A549 (cell line): ENCODE measurements at regions of chr20 and their contacts with region 1.

Region 1: GRCh38 chr20:41095110-41095969 is 42.0 kb upstream of the PLCG1 start:
- DNase-seq: peak; percentile 53 to 64
- ATAC-seq: peak; percentile 86 to 87
- H3K4me3 ChIP-seq: no peak overlapping the region
- H3K27ac ChIP-seq: no peak overlapping the region
- H3K4me1 ChIP-seq: no peaks in the 10 kb centered on the region
- CTCF ChIP-seq: peak; percentile 91
- EP300 ChIP-seq: no peak
- POLR2A ChIP-seq: no peak
- RAD21 ChIP-seq: peak; percentile 79 to 81

Region 2: DNA sequence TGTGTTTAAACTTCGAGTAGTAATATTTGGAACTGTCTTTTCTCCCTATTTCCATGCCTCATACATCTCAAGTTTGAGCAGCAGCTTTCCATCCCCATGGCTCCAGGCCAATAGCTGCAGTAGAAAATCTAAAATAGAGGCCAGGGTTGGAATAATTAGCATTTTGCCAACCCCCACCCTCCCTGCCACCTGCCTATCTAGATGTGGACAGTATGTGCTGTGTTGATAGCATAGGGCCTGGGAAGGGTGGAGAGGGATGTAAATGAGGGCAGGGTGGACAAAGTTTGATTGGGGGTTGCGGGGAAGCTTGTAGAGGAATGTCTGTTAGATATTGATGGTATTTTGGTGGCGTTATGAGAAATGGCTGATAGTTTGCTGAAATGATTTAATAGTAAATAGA is 61.1 kb before region 1 on chr20:
- CTCF ChIA-PET with region 1: interaction called, 13 read pairs
- POLR2A ChIA-PET with region 1: no interaction called
- DNase-seq: no peak
- ATAC-seq: no peak
- H3K4me3 ChIP-seq: no peak overlapping the region
- H3K27ac ChIP-seq: no peak overlapping the region
- H3K4me1 ChIP-seq: peaks cover 57% of the 10 kb centered on the region
- CTCF ChIP-seq: no peak
- EP300 ChIP-seq: no peak
- POLR2A ChIP-seq: no peak
- RAD21 ChIP-seq: no peak

Region 3: DNA sequence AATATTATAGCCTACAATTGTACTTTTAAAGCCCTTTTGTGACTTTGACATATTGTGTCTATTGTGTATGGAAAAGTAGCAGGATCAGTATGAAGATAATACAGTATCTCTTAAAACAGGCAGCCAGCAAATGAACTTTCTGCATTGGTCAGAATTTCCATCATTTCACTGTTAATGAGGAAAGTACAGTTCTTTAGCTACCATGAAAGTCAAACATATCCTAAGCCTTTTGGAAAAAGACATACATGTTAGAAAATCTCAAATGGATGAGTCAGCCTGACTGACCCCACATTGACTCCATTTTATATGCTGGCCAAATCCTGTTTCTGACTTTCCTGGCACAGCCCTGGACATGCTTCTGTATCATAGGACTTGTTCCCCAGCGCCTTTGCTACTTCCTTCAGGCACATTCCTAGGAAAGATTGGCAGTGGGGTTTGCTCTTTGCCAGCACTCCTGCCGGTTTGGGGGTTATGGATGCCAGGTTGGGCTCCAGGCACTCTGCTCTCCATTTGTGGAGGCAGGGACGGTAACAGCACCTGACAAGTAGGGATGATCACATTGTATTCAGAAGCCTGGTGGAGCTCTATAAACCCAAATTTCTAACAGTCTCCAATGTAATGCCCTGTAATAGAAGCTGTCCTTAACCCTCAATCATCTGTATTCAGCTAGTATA is 23.0 kb before region 1 on chr20:
- CTCF ChIA-PET with region 1: interaction called, 11 read pairs
- POLR2A ChIA-PET with region 1: no interaction called
- DNase-seq: no peak
- ATAC-seq: peak in 1 of 2 experiments; percentile 70; a peak in 3 of 6 replicates
- H3K4me3 ChIP-seq: no peak overlapping the region
- H3K27ac ChIP-seq: peak overlapping the region in 1 of 2 experiments; percentile 42; a peak in 1 of 6 replicates
- H3K4me1 ChIP-seq: peaks cover 33% of the 10 kb centered on the region
- CTCF ChIP-seq: no peak
- EP300 ChIP-seq: no peak
- POLR2A ChIP-seq: no peak
- RAD21 ChIP-seq: no peak

Region 4: GRCh38 chr20:41078329-41078728 is 17.0 kb before region 1 on chr20:
- CTCF ChIA-PET with region 1: interaction called, 14 read pairs
- POLR2A ChIA-PET with region 1: no interaction called
- DNase-seq: peak; percentile 15 to 38
- ATAC-seq: peak; percentile 82 to 86
- H3K4me3 ChIP-seq: no peak overlapping the region
- H3K27ac ChIP-seq: no peak overlapping the region
- H3K4me1 ChIP-seq: peaks cover 19% of the 10 kb centered on the region; the same call in 2 of the 3 replicates
- CTCF ChIP-seq: peak; percentile 53
- EP300 ChIP-seq: no peak
- POLR2A ChIP-seq: no peak
- RAD21 ChIP-seq: peak; percentile 56 to 62

Region 5: GRCh38 chr20:41110930-41111577 is 15.7 kb after region 1 on chr20:
- CTCF ChIA-PET with region 1: interaction called, 11 read pairs
- POLR2A ChIA-PET with region 1: no interaction called
- DNase-seq: no peak
- ATAC-seq: no peak; a peak in 1 of 6 replicates
- H3K4me3 ChIP-seq: no peak overlapping the region
- H3K27ac ChIP-seq: no peak overlapping the region
- H3K4me1 ChIP-seq: peaks cover 10% of the 10 kb centered on the region; the same call in 1 of the 3 replicates
- CTCF ChIP-seq: no peak
- EP300 ChIP-seq: no peak
- POLR2A ChIP-seq: no peak
- RAD21 ChIP-seq: no peak